K562 (cell line): ENCODE measurements at regions of chr2 and their contacts with region 1.

Region 1: DNA sequence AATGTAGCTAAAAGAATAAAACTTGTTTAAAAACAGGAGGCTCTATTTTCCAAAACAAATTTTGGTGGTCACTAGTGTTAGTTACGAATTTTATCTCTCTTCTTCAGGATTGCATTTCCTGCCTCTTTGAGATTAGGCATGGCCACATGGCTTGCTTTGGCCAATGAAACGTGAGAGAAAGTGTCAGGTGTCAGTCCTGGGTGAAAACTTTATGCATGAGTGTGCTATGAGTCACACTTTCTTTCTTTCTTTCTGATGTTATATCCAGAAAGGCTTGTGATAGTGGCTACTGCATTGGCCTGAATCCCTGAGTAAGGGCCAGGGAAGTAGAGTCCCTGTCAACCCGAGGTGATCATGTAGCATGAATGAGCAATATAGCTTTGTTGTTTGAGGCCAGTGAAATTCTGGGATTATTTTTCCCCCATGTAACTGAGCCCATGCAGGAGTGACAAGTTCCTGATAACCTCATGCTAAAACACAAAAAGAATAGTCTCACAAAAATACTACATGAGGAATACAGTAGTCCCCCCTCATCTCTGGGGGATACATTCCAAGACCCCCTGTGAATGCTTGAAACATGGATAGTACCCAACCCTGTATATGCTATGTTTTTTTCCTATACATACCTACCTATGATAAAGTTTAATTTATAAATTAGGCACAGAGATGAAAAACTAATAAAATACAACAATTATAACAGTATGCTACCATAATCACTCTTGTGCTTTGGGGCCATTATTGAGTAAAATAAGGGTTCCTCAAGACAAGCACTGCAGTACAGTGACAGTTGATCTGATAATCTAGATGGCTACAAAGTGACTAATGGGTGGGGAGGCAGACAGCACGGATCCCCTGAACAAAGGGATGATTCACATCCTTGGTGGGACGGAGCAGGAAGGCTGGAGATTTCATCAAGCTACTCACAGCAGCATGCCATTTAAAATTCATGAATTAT is 109.5 kb downstream of the CDC42EP3 start:
- DNase-seq: peak; percentile 77 to 91 (median 82)
- ATAC-seq: peak; percentile 92
- H3K4me3 ChIP-seq: peak overlapping the region; percentile 33; the same call in 1 of the 2 replicates
- H3K27ac ChIP-seq: peak overlapping the region; percentile 95
- H3K4me1 ChIP-seq: peaks cover 0 to 35% of the 10 kb centered on the region in 2 experiments; a peak in 4 of 5 replicates
- H3K27me3 ChIP-seq: no peaks in the 10 kb centered on the region
- CTCF ChIP-seq: no peak
- EP300 ChIP-seq: peak; percentile 93
- POLR2A ChIP-seq: 0 out of 2 replicates have a peak, but pooled peaks have one; percentile 44
- RAD21 ChIP-seq: no peak; a peak in 1 of 4 replicates

Region 2: GRCh38 chr2:36973320-36973719 is 588.6 kb before region 1 on chr2:
- CTCF ChIA-PET with region 1: no interaction called
- POLR2A ChIA-PET with region 1: no interaction called
- in situ Hi-C with region 1: no loop called
- intact Hi-C with region 1: no loop called
- DNase-seq: peak in 1 of 4 experiments; percentile 47
- ATAC-seq: peak; percentile 28
- H3K4me3 ChIP-seq: no peak overlapping the region
- H3K27ac ChIP-seq: no peak overlapping the region
- H3K4me1 ChIP-seq: peaks cover under 1 to 9% of the 10 kb centered on the region in 2 experiments; a peak in 3 of 5 replicates
- H3K27me3 ChIP-seq: no peaks in the 10 kb centered on the region
- CTCF ChIP-seq: no peak
- EP300 ChIP-seq: peak; percentile 67
- POLR2A ChIP-seq: no peak
- RAD21 ChIP-seq: no peak

Region 3: DNA sequence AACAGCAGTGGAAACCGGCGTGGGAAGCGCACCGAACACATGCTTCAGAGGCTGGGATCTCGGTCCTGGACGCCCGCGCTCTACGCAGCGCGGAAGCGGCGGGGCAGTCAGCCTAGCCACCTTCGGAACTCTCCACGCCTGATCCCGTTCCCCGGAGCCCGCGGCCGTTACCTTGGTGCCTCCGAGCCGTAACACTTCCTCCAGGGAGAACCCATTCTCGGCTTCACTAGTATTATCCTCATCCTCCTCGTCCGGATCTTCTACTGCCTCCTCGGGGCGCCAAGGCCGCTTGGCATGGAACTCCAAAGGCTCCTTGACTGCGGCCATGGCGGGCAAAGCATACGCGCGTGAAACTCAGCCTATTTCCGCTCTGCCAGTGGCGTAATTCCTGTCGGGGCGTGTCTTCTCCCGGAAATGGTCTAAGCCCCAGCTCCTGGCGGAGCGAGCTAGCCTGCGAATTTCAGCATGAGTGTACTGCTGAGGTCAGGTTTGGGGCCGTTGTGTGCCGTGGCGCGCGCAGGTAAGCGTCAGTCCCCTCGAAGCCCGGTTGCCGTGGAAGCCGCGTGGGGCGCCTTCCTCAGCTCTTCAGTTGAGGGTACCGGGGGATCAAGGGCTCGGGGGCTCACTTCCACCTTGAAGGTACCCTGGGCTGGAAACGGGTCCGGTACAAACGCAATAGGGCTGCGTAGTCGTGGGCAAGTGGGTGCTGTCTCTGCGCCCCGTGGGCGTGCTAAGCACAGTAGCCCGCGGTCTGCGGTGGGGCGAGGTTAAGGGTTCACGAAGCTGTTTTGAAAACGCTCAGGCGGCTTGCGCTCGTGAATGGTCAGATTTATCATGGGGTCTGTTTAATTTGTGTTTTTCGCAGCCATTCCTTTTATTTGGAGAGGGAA is 330.4 kb before region 1 on chr2 and contains the starts of genes CEBPZ and NDUFAF7:
- CTCF ChIA-PET with region 1: no interaction called
- POLR2A ChIA-PET with region 1: no interaction called
- in situ Hi-C with region 1: loop called (anchors 10 kb)
- intact Hi-C with region 1: no loop called
- DNase-seq: peak; percentile 80 to 93 (median 85)
- ATAC-seq: peak; percentile 96
- H3K4me3 ChIP-seq: peak within 1 kb of the TSS; percentile 68
- H3K27ac ChIP-seq: peak within 1 kb of the TSS; percentile 80
- H3K4me1 ChIP-seq: peaks cover 7 to 19% of the 10 kb centered on the region in 2 experiments; a peak in 4 of 5 replicates
- H3K27me3 ChIP-seq: no peaks in the 10 kb centered on the region
- CTCF ChIP-seq: 0 out of 6 replicates have a peak, but pooled peaks of 1 of the 3 experiments have one; percentile 4
- EP300 ChIP-seq: peak; percentile 8; the same call in 1 of the 2 replicates
- POLR2A ChIP-seq: peak; percentile 97
- RAD21 ChIP-seq: no peak
- polyA plus RNA-seq, gene CEBPZ: 56.5 to 102 TPM
- polyA plus RNA-seq, gene NDUFAF7: 18.9 to 25.0 TPM

Region 4: DNA sequence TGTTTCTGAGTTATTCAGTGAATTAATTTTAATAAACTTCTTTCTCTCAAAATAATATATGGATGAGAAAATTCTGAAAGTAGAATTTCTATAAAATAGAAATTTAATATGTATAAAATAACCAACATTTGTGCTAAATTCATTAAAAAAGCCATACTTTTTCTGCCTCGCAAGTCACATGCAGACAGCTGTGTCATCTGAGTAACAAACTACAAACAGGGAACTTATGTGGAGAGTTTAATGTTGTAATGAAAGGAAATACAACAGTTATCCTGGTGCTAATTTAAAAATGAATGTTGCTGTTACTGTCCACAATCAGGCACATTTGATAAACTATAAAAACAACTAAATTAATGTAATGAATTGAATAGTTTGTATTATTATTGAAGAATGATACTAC is 385.4 kb after region 1 on chr2:
- CTCF ChIA-PET with region 1: no interaction called
- POLR2A ChIA-PET with region 1: no interaction called
- in situ Hi-C with region 1: no loop called
- intact Hi-C with region 1: no loop called
- DNase-seq: no peak
- ATAC-seq: no peak
- H3K4me3 ChIP-seq: no peak overlapping the region
- H3K27ac ChIP-seq: no peak overlapping the region
- H3K4me1 ChIP-seq: no peaks in the 10 kb centered on the region
- H3K27me3 ChIP-seq: no peaks in the 10 kb centered on the region; a peak in 3 of 5 replicates
- CTCF ChIP-seq: no peak
- EP300 ChIP-seq: no peak
- POLR2A ChIP-seq: no peak
- RAD21 ChIP-seq: no peak